Thyroid gland (tissue), 4 donors: ENCODE measurements at regions of chr3 and their contacts with region 1.

Region 1: GRCh38 chr3:157572559-157573270 is 69.5 kb upstream of the VEPH1 start:
- DNase-seq: peak; percentile 32 to 33
- H3K4me3 ChIP-seq: no peak overlapping the region
- H3K27ac ChIP-seq: no peak overlapping the region
- H3K4me1 ChIP-seq: no peaks in the 10 kb centered on the region
- H3K27me3 ChIP-seq: no peaks in the 10 kb centered on the region
- CTCF ChIP-seq: peak; percentile 40 to 82 (median 70)
- POLR2A ChIP-seq: no peak

Region 2: DNA sequence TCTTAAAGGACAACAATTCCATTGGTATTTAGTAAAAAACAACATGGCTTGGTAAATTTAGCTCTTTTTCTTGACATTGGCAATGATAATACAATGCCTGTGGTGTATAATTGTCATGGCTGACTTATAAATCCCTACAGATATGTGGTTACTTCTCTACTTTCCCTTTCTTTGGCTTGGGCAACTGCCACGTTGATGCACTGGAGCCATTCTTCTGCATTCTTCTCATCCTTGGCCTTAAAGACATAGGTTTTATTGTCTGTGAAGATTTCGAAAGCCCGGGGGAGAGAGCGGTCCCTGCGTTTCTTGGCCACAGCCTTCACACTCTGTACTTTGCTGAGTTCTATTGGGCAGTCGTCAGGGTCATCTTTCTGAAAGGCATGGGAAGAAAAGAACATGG is 311.7 kb before region 1 on chr3:
- intact Hi-C with region 1: no loop called
- DNase-seq: no peak
- H3K4me3 ChIP-seq: no peak overlapping the region
- H3K27ac ChIP-seq: no peak overlapping the region
- H3K4me1 ChIP-seq: no peaks in the 10 kb centered on the region
- H3K27me3 ChIP-seq: no peaks in the 10 kb centered on the region
- CTCF ChIP-seq: no peak
- POLR2A ChIP-seq: no peak

Region 3: GRCh38 chr3:157532529-157533297 is 40.0 kb before region 1 on chr3:
- intact Hi-C with region 1: loop called (anchors 5 kb)
- DNase-seq: peak; percentile 15 to 27
- H3K4me3 ChIP-seq: no peak overlapping the region
- H3K27ac ChIP-seq: peak overlapping the region in 1 of 3 donors; percentile 64
- H3K4me1 ChIP-seq: peaks cover 10 to 21% of the 10 kb centered on the region in 2 donors
- H3K27me3 ChIP-seq: no peaks in the 10 kb centered on the region
- CTCF ChIP-seq: peak; percentile 51 to 95 (median 82)
- POLR2A ChIP-seq: no peak